Spleen (tissue), 13 donors: ENCODE measurements at regions of chr1 and their contacts with region 1.

Region 1: GRCh38 chr1:226121587-226122400 is 59.3 kb downstream of the H3-3A start:
- DNase-seq: peak; percentile 95
- H3K4me3 ChIP-seq: peak overlapping the region; percentile 52 to 84 (median 66)
- H3K27ac ChIP-seq: peak overlapping the region; percentile 82 to 96 (median 89)
- H3K4me1 ChIP-seq: peaks cover 9 to 74% (median 48%) of the 10 kb centered on the region in 6 donors
- H3K27me3 ChIP-seq: peaks cover 0 to 10% (median 0%) of the 10 kb centered on the region in 7 donors
- CTCF ChIP-seq: peak; percentile 54 to 97 (median 88)
- POLR2A ChIP-seq: peak in 1 of 3 donors; percentile 23

Region 2: DNA sequence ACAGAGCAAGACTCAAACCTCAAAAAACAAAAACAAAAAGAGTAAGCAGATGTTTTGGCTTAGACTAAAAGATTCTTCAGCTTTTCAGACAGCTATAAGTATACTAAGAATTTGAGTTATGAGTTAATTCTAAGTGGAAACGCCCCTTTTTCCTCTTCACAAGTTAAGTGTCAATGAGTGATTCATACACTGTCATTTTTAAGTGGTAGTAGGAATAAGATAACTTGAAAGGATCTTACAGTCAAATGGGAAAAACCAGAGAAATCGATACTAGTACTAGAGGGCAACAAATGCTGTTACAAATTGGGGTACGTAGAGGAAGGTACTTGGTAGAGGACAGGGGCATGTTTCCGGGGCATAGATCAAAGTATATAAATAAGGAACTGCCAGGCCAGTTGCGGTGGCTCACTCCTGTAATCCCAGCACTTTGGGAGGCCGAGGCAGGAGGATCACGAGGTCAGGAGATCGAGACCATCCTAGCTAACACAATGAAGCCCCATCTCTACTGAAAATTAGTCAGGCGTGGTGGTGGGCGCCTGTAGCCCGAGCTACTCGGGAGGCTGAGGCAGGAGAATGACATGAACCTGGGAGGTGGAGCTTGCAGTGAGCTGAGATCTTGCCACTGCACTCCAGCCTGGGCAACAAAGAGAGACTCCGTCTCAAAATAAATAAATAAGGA is 51.8 kb before region 1 on chr1:
- intact Hi-C with region 1: loop called (anchors 2 kb)
- DNase-seq: no peak
- H3K4me3 ChIP-seq: no peak overlapping the region
- H3K27ac ChIP-seq: peak overlapping the region in 1 of 8 donors; percentile 16
- H3K4me1 ChIP-seq: peaks cover 41 to 83% (median 58%) of the 10 kb centered on the region in 6 donors
- H3K27me3 ChIP-seq: no peaks in the 10 kb centered on the region
- CTCF ChIP-seq: no peak
- POLR2A ChIP-seq: no peak

Region 3: DNA sequence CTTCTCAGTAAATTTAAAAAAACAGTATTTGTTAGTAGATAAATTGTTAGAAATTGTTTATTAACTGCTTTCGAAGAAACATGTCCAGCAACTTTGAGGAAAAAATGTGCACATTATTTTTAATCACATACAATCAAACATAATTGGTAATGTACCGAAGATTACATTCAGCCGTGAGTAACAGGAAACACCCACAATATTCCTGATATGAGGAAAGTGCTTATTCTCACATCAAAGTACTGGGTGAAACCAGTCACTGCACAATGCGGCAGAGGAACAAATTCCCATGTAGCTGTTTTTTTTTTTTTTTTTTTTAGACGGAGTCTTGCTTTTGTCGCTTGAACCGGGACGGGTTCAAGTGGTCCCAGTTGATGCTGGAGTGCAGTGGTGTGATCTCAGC is 55.1 kb after region 1 on chr1:
- intact Hi-C with region 1: no loop called
- DNase-seq: no peak
- H3K4me3 ChIP-seq: no peak overlapping the region
- H3K27ac ChIP-seq: no peak overlapping the region
- H3K4me1 ChIP-seq: peaks cover 3 to 85% (median 36%) of the 10 kb centered on the region in 6 donors
- H3K27me3 ChIP-seq: no peaks in the 10 kb centered on the region
- CTCF ChIP-seq: no peak
- POLR2A ChIP-seq: no peak

Region 4: DNA sequence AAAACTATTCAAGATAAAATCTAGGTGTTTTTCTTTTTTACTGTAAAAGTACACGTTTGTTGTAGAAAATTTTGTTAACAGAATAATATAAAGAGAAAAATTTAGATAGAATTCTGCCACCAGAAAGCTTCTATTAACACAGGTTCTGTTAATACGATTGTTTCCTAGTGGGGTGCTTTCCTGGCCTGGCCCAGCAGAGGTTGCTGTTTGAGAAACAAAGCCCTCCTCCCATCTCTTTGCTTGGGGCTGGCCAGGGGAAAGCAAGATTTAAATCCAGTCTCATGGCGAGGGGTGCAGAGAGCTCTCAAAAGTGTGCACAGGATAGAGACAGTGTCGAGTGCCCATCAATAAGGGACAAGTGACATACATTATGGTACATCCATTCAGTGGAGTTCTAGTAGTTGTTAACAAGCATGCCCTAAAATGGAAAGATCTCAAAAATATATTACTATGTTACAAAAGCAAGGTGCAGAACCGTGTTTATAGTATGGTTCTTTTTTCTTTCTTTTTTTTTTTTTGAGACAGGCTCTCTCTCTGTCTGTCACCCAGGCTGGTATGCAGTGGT is 79.3 kb after region 1 on chr1:
- intact Hi-C with region 1: loop called (anchors 2 kb)
- DNase-seq: no peak
- H3K4me3 ChIP-seq: no peak overlapping the region
- H3K27ac ChIP-seq: no peak overlapping the region
- H3K4me1 ChIP-seq: peaks cover 0 to 7% (median 3%) of the 10 kb centered on the region in 6 donors
- H3K27me3 ChIP-seq: peaks cover 0 to 1% (median 0%) of the 10 kb centered on the region in 7 donors
- CTCF ChIP-seq: no peak
- POLR2A ChIP-seq: no peak